ENCODE measurements at regions of chr1 and their contacts with region 1.

Region 1: DNA sequence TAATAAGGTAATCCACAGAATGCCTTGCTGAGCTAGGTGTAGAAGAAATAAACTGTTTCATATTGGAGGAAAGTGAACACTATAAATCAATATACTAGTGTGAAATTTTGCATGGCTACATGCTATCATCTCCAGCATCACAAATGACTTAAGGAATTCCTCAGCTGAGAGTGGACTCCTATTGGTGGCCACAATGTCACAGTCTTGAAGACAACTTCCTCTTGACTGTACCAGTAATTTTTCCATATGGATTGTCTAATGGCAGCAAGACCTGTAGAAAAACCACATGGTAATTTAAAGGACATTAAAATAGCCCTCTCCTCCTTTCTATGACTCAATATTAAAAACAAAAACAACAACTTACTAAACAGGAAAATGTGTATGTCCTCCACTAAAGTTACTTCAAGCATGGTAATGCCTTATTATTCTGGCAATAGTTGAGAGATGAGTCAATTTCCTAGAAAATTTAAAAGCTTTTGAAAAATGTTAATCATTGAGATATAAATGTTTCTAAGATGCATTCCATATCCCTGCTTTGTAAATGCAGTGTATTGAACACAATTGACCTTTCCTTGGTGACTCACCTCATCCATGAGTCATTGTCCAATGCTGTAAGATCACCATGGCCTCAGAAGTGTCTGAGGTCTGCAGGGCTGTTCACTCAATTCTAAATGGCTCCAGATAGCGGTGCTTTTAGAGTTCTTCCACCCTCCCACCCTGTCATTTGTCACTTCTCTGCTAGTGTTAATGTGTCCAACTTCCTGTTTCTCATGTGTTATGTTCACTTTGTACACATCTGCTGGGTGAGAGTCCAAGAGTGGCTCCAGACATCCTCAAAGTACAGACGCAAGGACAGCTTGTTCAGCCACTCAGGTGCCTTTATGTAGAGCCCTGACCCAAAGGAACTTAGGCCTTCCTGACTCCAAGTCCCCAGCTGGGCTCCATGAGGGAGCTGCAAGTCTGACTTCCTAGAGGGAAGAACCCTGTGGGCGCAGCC is 32.8 kb upstream of the DNASE2B start:
- DNase-seq: peak; percentile 96
- H3K4me3 ChIP-seq: no peak overlapping the region
- H3K27ac ChIP-seq: peak overlapping the region; percentile 97
- H3K4me1 ChIP-seq: peaks cover 28% of the 10 kb centered on the region
- H3K27me3 ChIP-seq: no peaks in the 10 kb centered on the region
- CTCF ChIP-seq: no peak
- POLR2A ChIP-seq: peak; percentile 51

Region 2: GRCh38 chr1:84174051-84174556 is 191.4 kb before region 1 on chr1:
- CTCF ChIA-PET with region 1: no interaction called
- POLR2A ChIA-PET with region 1: no interaction called
- dilution Hi-C with region 1: no loop called
- intact Hi-C with region 1: loop called (anchors 1 kb)
- DNase-seq: peak; percentile 88
- H3K4me3 ChIP-seq: peak overlapping the region in 1 of 3 experiments; percentile 48
- H3K27ac ChIP-seq: peak overlapping the region; percentile 100
- H3K4me1 ChIP-seq: peaks cover 64% of the 10 kb centered on the region
- H3K27me3 ChIP-seq: no peaks in the 10 kb centered on the region
- CTCF ChIP-seq: no peak
- POLR2A ChIP-seq: no peak

Region 3: DNA sequence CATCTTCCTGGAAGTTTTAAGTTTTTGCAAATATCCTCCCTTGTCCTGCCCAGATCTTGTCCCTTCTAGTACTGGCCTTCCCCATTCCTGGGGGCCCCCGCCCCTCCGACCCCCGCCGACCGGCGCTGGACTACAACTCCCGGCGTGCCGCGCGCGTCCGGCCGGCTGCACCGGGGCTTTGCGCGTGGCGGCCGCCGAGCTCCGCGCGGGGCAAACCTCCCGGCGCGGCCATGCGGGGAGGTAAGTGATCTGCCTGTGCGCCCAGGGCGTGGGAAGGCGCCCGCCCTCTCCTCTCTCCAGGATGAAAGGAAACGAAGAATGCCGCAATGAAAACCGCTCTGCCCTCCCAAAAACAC is 67.2 kb before region 1 on chr1:
- CTCF ChIA-PET with region 1: interaction called, 3 read pairs
- POLR2A ChIA-PET with region 1: interaction called, 3 read pairs
- dilution Hi-C with region 1: no loop called
- intact Hi-C with region 1: loop called (anchors 1 kb)
- DNase-seq: peak; percentile 61
- H3K4me3 ChIP-seq: peak overlapping the region; percentile 72 to 94 (median 78)
- H3K27ac ChIP-seq: peak overlapping the region; percentile 75
- H3K4me1 ChIP-seq: peaks cover 46% of the 10 kb centered on the region
- H3K27me3 ChIP-seq: no peaks in the 10 kb centered on the region
- CTCF ChIP-seq: no peak
- POLR2A ChIP-seq: peak; percentile 73

Region 4: GRCh38 chr1:84311296-84311695 is 54.2 kb before region 1 on chr1:
- CTCF ChIA-PET with region 1: no interaction called
- POLR2A ChIA-PET with region 1: no interaction called
- dilution Hi-C with region 1: no loop called
- intact Hi-C with region 1: no loop called
- DNase-seq: no peak
- H3K4me3 ChIP-seq: no peak overlapping the region
- H3K27ac ChIP-seq: no peak overlapping the region
- H3K4me1 ChIP-seq: no peaks in the 10 kb centered on the region
- H3K27me3 ChIP-seq: no peaks in the 10 kb centered on the region
- CTCF ChIP-seq: no peak
- POLR2A ChIP-seq: no peak

Region 5: DNA sequence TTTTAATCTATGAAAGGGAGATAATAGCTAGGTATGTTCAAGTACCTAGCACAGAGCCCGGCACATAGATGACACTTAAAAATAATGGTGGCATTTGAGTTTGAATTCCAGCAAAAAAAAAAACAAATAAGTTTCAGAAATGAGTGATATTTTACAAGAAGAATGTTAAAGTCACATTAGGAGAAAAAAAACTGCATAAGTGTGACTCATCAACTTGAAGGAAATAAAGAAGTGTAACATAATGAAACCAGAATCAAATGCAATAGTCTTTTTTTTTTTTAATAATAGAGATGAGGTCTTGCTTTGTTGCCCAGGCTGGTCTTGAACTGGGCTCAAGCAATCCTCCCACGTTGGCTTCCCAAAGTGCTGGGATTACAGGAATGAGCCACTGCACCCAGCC is 49.9 kb after region 1 on chr1:
- CTCF ChIA-PET with region 1: no interaction called
- POLR2A ChIA-PET with region 1: no interaction called
- dilution Hi-C with region 1: no loop called
- intact Hi-C with region 1: loop called (anchors 1 kb)
- DNase-seq: peak; percentile 47
- H3K4me3 ChIP-seq: no peak overlapping the region
- H3K27ac ChIP-seq: no peak overlapping the region
- H3K4me1 ChIP-seq: peaks cover 20% of the 10 kb centered on the region
- H3K27me3 ChIP-seq: no peaks in the 10 kb centered on the region
- CTCF ChIP-seq: no peak
- POLR2A ChIP-seq: no peak

Region 6: DNA sequence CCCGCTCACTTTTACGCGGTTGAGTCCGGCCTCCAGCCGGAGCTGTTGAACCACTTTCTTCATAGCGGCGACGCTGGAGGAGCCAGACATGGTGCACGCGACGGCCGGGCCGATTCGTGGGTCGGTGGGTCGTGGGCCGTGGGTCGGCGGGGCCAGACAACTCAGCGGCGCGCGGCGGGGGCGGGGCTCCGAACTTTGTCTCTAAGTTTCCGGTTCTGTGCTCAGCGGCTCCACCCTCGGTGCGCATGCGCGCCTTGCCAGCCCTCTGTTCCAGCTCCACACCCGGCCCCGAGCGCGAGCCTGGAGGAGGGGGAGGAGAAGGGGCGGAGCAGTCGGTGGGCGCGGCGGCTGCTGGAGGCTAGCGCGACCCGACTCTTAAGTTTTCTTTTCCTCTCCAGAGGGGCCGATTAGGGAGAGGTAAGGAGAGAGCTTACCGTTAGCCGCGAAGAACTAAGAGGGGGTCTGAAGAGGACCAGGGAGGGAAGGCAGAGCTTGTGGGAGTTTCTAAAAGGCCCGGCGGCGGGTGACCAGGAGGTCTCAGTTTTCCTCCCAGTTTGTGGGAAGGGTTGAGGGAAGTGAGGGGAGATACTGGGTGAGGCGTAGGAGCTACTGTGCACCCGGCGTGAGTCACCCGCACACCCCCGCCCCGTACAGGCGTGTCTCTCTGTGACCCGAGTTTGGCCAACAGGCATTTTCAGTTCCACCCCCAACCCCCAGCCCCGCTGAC is 140.6 kb after region 1 on chr1 and contains the starts of genes GNG5 and SPATA1:
- CTCF ChIA-PET with region 1: no interaction called
- POLR2A ChIA-PET with region 1: interaction called, 3 read pairs
- dilution Hi-C with region 1: no loop called
- intact Hi-C with region 1: loop called (anchors 1 kb)
- DNase-seq: peak; percentile 97
- H3K4me3 ChIP-seq: peak within 1 kb of the TSS; percentile 55 to 89 (median 73)
- H3K27ac ChIP-seq: peak within 1 kb of the TSS; percentile 91
- H3K4me1 ChIP-seq: peaks cover 25% of the 10 kb centered on the region
- H3K27me3 ChIP-seq: no peaks in the 10 kb centered on the region
- CTCF ChIP-seq: no peak
- POLR2A ChIP-seq: peak; percentile 81
- total RNA-seq, gene GNG5: 172 and 175 TPM in 2 replicates
- total RNA-seq, gene SPATA1: 1.7 and 2.6 TPM in 2 replicates

Region 7: GRCh38 chr1:84763912-84764663 is 398.6 kb after region 1 on chr1:
- CTCF ChIA-PET with region 1: no interaction called
- POLR2A ChIA-PET with region 1: no interaction called
- dilution Hi-C with region 1: no loop called
- intact Hi-C with region 1: no loop called
- DNase-seq: no peak
- H3K4me3 ChIP-seq: no peak overlapping the region
- H3K27ac ChIP-seq: no peak overlapping the region
- H3K4me1 ChIP-seq: no peaks in the 10 kb centered on the region
- H3K27me3 ChIP-seq: peaks cover 29 to 30% of the 10 kb centered on the region in 2 experiments
- CTCF ChIP-seq: no peak
- POLR2A ChIP-seq: no peak